SK-N-SH (cell line): ENCODE measurements at regions of chr1 and their contacts with region 1.

Region 1: GRCh38 chr1:162035241-162035640 is 11.6 kb upstream of the OLFML2B start:
- DNase-seq: no peak
- H3K4me3 ChIP-seq: no peak overlapping the region
- H3K27ac ChIP-seq: no peak overlapping the region
- H3K4me1 ChIP-seq: peaks cover 13 to 16% of the 10 kb centered on the region in 2 experiments; a peak in 2 of 4 replicates
- H3K27me3 ChIP-seq: no peaks in the 10 kb centered on the region
- CTCF ChIP-seq: no peak
- EP300 ChIP-seq: no peak
- RAD21 ChIP-seq: no peak

Region 2: GRCh38 chr1:161784968-161785367 is 250.3 kb before region 1 on chr1:
- CTCF ChIA-PET with region 1: interaction called, 17 read pairs
- POLR2A ChIA-PET with region 1: no interaction called
- DNase-seq: no peak
- H3K4me3 ChIP-seq: no peak overlapping the region
- H3K27ac ChIP-seq: no peak overlapping the region
- H3K4me1 ChIP-seq: peaks cover 0 to 11% of the 10 kb centered on the region in 2 experiments; a peak in 2 of 4 replicates
- H3K27me3 ChIP-seq: no peaks in the 10 kb centered on the region
- CTCF ChIP-seq: no peak
- EP300 ChIP-seq: no peak
- RAD21 ChIP-seq: no peak

Region 3: GRCh38 chr1:162023547-162024501 is 11.4 kb before region 1 on chr1 and contains the start of gene OLFML2B:
- CTCF ChIA-PET with region 1: interaction called, 55 read pairs
- POLR2A ChIA-PET with region 1: no interaction called
- DNase-seq: peak; percentile 88
- H3K4me3 ChIP-seq: peak within 1 kb of the TSS; percentile 68 to 96
- H3K27ac ChIP-seq: peak within 1 kb of the TSS in 1 of 2 experiments; percentile 61; a peak in 2 of 4 replicates
- H3K4me1 ChIP-seq: peaks cover 22 to 26% of the 10 kb centered on the region in 2 experiments
- H3K27me3 ChIP-seq: no peaks in the 10 kb centered on the region
- CTCF ChIP-seq: peak; percentile 62
- EP300 ChIP-seq: no peak
- RAD21 ChIP-seq: peak; percentile 60
- polyA plus RNA-seq, gene OLFML2B: 5.7 and 7.3 TPM in 2 replicates

Region 4: GRCh38 chr1:162046921-162047320 is 11.7 kb after region 1 on chr1:
- CTCF ChIA-PET with region 1: interaction called, 19 read pairs
- POLR2A ChIA-PET with region 1: no interaction called
- DNase-seq: no peak
- H3K4me3 ChIP-seq: no peak overlapping the region
- H3K27ac ChIP-seq: no peak overlapping the region
- H3K4me1 ChIP-seq: no peaks in the 10 kb centered on the region
- H3K27me3 ChIP-seq: no peaks in the 10 kb centered on the region
- CTCF ChIP-seq: no peak
- EP300 ChIP-seq: no peak
- RAD21 ChIP-seq: no peak